ENCODE measurements at regions of chr7 and their contacts with region 1.

Region 1: GRCh38 chr7:30164567-30164966 is 29.8 kb downstream of the MTURN start:
- DNase-seq: no peak
- ATAC-seq: peak; percentile 24
- H3K4me3 Mint-ChIP-seq: no peak overlapping the region
- H3K27ac Mint-ChIP-seq: peak overlapping the region; percentile 17
- H3K4me1 Mint-ChIP-seq: peaks cover 38% of the 10 kb centered on the region
- H3K27me3 Mint-ChIP-seq: no peaks in the 10 kb centered on the region

Region 2: GRCh38 chr7:30134611-30135545 is 29.7 kb before region 1 on chr7 and contains the start of gene MTURN:
- CTCF ChIA-PET with region 1: no interaction called
- POLR2A ChIA-PET with region 1: no interaction called
- intact Hi-C with region 1: loop called in 1 of 2 experiments (anchors 2 kb)
- DNase-seq: peak; percentile 92
- ATAC-seq: peak; percentile 83
- H3K4me3 Mint-ChIP-seq: peak within 1 kb of the TSS; percentile 81
- H3K27ac Mint-ChIP-seq: peak within 1 kb of the TSS; percentile 84
- H3K4me1 Mint-ChIP-seq: peaks cover 4% of the 10 kb centered on the region
- H3K27me3 Mint-ChIP-seq: no peaks in the 10 kb centered on the region
- total RNA-seq, gene MTURN: 4.2 TPM

Region 3: GRCh38 chr7:30348083-30348560 is 183.6 kb after region 1 on chr7:
- CTCF ChIA-PET with region 1: interaction called, 5 read pairs
- POLR2A ChIA-PET with region 1: no interaction called
- intact Hi-C with region 1: loop called (anchors 2 to 5 kb)
- DNase-seq: peak; percentile 59
- ATAC-seq: peak; percentile 91
- H3K4me3 Mint-ChIP-seq: peak overlapping the region; percentile 69
- H3K27ac Mint-ChIP-seq: peak overlapping the region; percentile 88
- H3K4me1 Mint-ChIP-seq: peaks cover 54% of the 10 kb centered on the region
- H3K27me3 Mint-ChIP-seq: no peaks in the 10 kb centered on the region

Region 4: GRCh38 chr7:30379131-30379530 is 214.6 kb after region 1 on chr7:
- CTCF ChIA-PET with region 1: no interaction called
- POLR2A ChIA-PET with region 1: no interaction called
- intact Hi-C with region 1: no loop called
- DNase-seq: no peak
- ATAC-seq: no peak
- H3K4me3 Mint-ChIP-seq: no peak overlapping the region
- H3K27ac Mint-ChIP-seq: no peak overlapping the region
- H3K4me1 Mint-ChIP-seq: no peaks in the 10 kb centered on the region
- H3K27me3 Mint-ChIP-seq: no peaks in the 10 kb centered on the region

Region 5: DNA sequence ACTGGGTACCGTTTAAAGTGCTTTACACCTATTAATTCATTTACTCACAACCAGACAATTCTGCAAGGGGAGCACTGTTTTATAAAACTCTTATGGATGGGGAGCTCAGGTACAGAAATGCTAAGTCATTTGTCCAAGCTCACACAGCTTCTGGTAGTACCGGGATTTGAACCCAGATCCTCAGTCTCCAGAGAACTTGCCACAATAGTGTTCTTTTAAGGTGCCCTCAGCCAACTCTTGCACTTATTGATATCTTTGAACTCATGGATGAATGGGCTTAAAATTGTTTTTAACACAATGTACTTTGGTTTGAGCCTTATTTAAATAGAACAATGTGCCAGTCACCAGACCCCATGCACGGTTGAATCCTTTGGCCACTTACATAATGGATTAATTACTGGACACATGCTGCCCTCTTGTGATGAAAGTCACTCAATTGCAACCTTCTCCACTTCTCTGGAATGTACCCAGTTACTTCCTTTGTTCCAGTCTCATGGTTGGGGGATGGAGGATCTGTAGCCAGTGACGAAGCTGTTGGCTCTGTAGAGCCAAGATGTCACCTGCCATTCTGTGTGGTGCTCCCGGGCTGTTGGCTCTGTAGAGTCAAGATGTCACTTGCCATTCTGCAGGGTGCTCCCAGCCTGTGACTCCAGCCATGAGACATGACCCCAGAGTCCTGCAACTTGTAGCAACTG is 248.4 kb after region 1 on chr7:
- CTCF ChIA-PET with region 1: no interaction called
- POLR2A ChIA-PET with region 1: no interaction called
- intact Hi-C with region 1: loop called in 1 of 2 experiments (anchors 5 kb)
- DNase-seq: no peak
- ATAC-seq: peak; percentile 60
- H3K4me3 Mint-ChIP-seq: no peak overlapping the region
- H3K27ac Mint-ChIP-seq: no peak overlapping the region
- H3K4me1 Mint-ChIP-seq: no peaks in the 10 kb centered on the region
- H3K27me3 Mint-ChIP-seq: no peaks in the 10 kb centered on the region

Region 6: GRCh38 chr7:30478349-30479201 is 314.0 kb after region 1 on chr7 and contains the start of gene NOD1:
- CTCF ChIA-PET with region 1: no interaction called
- POLR2A ChIA-PET with region 1: no interaction called
- intact Hi-C with region 1: loop called in 1 of 2 experiments (anchors 5 kb)
- DNase-seq: peak; percentile 86
- ATAC-seq: peak; percentile 89
- H3K4me3 Mint-ChIP-seq: peak within 1 kb of the TSS; percentile 88
- H3K27ac Mint-ChIP-seq: peak within 1 kb of the TSS; percentile 90
- H3K4me1 Mint-ChIP-seq: peaks cover 50% of the 10 kb centered on the region
- H3K27me3 Mint-ChIP-seq: no peaks in the 10 kb centered on the region
- total RNA-seq, gene NOD1: 10.8 to 11.0 TPM